AG04450 (cell line): ENCODE measurements at regions of chr10 and their contacts with region 1.

Region 1: DNA sequence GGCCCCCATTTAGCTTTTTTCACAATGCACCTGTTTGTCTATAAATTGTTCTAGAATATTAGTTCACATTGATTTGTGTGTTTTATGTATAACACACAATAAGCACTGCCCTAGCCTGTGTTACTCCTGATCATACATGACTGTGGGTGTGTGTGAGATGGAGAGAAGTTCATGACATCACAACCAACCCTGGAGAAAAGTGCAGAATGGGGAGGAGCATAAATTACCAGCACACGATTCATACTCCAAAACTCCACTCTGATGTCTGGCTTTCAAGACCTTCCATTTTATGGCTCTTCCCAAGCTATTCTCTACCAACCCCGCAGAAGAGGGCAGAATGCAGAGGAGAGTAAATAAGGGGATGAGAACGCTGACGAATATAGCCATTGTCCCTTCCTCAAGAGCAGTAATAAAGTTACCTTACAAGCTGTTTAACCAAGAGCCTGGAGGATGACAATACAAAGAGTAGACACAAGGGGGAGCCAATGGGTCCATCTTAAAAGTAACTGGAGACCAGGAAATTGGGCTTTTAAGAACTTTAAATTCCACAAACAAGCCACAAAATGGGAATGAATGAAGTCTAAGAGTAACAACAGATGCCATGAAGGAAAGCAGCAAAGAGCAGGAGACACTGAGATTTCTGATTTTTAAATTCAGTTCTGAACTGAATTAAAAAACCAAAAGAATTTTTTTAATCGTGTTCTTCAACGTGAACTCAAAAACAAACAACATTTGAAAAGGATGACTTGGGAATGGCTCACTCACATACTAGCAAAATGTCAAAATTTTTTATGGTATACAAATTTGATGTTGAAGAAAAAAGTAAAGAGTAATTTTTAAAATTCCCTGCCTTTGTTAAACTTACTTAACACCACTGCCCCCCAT is 159.6 kb downstream of the PARD3 start:
- DNase-seq: peak; percentile 39
- H3K4me3 ChIP-seq: no peak overlapping the region
- H3K27ac ChIP-seq: no peak overlapping the region
- H3K27me3 ChIP-seq: no peaks in the 10 kb centered on the region
- CTCF ChIP-seq: peak; percentile 80

Region 2: DNA sequence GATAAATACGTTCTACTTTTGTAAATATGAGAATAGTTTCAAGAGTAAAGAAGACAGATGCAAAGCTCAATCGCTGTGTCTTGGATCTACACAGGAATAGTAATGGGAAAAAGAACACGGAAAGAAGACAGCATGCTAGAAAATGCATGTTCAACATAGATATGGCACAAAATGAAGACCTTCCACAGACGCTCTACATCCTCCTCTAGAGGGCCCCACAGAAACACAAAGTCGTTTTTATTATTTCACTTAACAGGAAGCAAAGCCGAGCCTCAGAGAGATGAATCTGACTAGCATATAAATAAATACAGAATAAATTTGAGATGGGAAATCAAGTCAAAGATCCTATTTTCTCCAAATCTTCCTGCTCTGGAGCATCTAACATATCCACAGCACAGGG is 133.0 kb before region 1 on chr10:
- CTCF ChIA-PET with region 1: no interaction called
- POLR2A ChIA-PET with region 1: no interaction called
- DNase-seq: no peak
- H3K4me3 ChIP-seq: no peak overlapping the region
- H3K27ac ChIP-seq: no peak overlapping the region
- H3K27me3 ChIP-seq: no peaks in the 10 kb centered on the region
- CTCF ChIP-seq: peak; percentile 59

Region 3: DNA sequence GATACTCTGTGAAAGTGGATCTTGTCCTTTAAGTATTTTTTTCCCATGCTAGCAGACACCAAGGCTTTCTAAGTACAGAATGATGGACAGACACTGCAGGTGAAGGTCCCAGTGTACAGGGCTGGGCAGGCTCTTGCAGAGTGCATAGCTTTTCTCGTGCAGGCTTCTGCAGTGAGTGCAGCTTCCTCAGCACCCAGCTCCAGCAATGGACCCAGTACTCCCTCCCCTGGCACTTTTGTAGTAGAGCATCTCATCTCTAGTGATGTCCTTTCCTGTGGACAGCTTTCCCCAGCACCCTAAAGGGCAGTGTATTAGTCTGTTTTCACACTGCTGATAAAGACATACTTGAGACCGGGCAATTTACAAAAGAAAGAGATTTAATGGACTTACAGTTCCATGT is 330.3 kb after region 1 on chr10:
- CTCF ChIA-PET with region 1: interaction called, 11 read pairs
- POLR2A ChIA-PET with region 1: no interaction called
- DNase-seq: no peak
- H3K4me3 ChIP-seq: no peak overlapping the region
- H3K27ac ChIP-seq: no peak overlapping the region
- H3K27me3 ChIP-seq: no peaks in the 10 kb centered on the region
- CTCF ChIP-seq: peak; percentile 38